Dorsolateral prefrontal cortex (tissue), 120 donors: ENCODE measurements at regions of chr7 and their contacts with region 1.

Region 1: DNA sequence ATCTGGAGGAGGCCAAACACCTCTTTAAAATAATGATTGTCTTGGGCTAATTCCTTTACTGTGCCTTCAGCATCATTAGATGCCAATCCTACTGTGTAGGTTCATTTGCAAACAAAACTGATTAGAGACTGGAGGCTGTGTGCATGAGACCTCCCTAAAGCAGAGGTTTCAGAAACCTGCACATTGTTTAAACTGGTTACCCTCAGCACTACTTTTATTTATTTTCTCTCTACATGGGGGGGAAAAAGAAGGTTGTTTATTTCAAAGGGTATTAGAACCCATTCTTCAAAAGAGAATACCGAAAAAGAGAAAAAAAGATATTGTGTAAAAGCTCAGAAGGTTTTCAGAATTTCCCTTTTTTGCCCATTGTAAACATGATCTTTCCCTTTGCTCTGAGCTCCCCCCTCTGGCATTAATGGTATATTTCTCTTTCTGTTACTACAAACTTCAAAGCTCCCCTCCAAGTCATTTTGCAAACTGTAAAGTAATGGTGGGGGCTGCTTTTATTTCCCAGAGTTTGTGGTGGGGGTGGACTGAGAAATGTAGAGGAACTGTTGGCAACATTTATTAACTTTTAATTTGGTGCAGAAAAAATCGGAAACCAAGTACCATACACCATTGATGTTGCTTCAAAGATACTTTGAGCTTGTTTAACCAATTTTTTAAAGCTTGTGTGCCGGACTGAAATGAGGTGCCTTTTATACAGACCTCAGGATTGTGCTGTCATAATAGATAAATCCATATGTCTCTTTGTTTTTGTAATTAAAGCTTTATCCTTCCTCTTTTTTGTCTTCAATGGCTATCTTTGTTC is 181.4 kb downstream of the EXOC4 start:
- DNase-seq: peak in 1 of 10 donors; percentile 7
- H3K4me3 ChIP-seq: peak overlapping the region in 2 of 59 donors; percentile 2 to 35
- H3K27ac ChIP-seq: peak overlapping the region in 1 of 59 donors; percentile 4
- H3K27me3 ChIP-seq: no peaks in the 10 kb centered on the region
- CTCF ChIP-seq: peak in 55 of 56 donors; percentile 27 to 77 (median 56)

Region 2: GRCh38 chr7:132318352-132319318 is 1115.6 kb before region 1 on chr7:
- intact Hi-C with region 1: loop called in 1 of 2 experiments (anchors 5 kb)
- DNase-seq: peak; percentile 81 to 92 (median 87)
- H3K4me3 ChIP-seq: peak overlapping the region in 21 of 59 donors; percentile 1 to 56 (median 20)
- H3K27ac ChIP-seq: peak overlapping the region in 2 of 59 donors; percentile 3 to 8
- H3K27me3 ChIP-seq: peaks cover 0 to 19% (median 2%) of the 10 kb centered on the region in 45 donors
- CTCF ChIP-seq: peak; percentile 85 to 98 (median 93)

Region 3: DNA sequence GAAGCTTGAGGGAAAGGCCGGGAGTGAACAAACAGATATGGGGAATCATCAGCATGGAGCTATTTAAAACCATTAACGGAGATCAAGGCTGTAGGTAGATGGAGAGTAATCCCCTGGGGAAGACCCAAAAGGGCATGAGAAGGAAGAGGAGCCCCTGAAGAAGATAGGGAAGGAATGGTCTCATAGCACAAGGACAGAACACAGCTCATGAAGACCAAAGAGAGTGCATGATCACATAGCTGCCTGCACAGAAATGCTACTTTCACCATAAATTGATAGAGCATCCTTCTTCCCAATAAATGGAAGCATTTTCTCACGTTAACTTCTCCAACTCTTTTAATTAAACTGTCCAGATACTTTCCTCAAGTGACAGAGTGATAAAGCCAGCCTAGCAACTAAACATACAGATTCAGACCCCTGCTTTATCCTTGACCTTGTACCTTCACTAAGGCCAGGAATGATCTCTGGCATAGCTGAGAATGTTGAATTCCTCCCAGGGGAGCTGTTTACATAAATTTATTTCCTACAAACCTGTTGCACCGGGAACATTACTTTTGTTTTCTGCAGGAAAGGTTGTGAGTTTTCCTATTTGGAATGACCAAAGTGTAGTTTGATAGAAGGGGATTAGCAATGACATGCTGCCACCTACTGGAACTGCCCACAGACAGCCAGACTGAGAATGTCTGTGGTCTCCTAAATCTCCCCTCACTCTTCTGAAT is 582.1 kb after region 1 on chr7:
- intact Hi-C with region 1: loop called in 1 of 2 experiments (anchors 10 kb)
- DNase-seq: peak in 5 of 10 donors; percentile 25 to 55 (median 36)
- H3K4me3 ChIP-seq: no peak overlapping the region
- H3K27ac ChIP-seq: no peak overlapping the region
- H3K27me3 ChIP-seq: no peaks in the 10 kb centered on the region
- CTCF ChIP-seq: peak; percentile 44 to 92 (median 76)